A673 (cell line): ENCODE measurements at regions of chr1 and their contacts with region 1.

Region 1: DNA sequence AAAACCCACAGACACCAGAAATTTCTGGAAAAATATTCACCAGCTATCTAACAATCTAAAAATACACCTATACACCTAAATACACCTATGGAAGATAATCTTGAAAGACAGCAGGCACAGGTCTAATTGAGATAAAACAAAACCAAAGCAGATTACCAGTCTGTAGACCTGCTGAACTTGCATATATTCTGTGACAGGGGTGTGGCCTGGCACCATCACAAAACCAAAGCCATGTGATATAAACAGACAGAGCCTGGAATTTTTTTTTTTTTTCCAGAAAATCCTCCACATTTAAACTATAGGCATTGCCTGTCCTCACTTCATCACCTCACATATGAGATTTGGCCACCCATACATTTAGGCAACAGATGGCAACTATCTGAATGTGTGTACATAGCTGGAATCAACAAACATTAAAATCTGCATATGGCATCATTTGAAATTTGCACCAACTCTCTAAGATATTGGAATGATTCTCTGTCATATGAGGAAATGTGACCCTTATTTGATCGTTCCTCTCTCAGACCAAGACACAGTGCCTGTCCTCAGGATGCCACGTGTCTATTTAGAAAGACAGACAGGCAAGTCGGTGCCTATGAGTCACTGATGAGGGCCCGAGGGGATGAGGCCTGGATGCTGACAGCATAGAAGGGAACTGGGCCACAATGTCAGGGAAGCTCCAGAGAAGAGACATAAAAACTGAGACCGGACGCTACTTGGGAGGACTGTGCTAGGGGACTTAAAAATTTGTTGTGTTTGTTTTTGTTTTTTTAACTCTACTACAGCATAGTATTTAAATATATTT is 32.6 kb downstream of the NMNAT2 start:
- DNase-seq: no peak
- H3K4me3 ChIP-seq: no peak overlapping the region
- H3K27ac ChIP-seq: no peak overlapping the region
- H3K4me1 ChIP-seq: no peaks in the 10 kb centered on the region
- H3K27me3 ChIP-seq: peaks cover 15% of the 10 kb centered on the region
- CTCF ChIP-seq: no peak

Region 2: DNA sequence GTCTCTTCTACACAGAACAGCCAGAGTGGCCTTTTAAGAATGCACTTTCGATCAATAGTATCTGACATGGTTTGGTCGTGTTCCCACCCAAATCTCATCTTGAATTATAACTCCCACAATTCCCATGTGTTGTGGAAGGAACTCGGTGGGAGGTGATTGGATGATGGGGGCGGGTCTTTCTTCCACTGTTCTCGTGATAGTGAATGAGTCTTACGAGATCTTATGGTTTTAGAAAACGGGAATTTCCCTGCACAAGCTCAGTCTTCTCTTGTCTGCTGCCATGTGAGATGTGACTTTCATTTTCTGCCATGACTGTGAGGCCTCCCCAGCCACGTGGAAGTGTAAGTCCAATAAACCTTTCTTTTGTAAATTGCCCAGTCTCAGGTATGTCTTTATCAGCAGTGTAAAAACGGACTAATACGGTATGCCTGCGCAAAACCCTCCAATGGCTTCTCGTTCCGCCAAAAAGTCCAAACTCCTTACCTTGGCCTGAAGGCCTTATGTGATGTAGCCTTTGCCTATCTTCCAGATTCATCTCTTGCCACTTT is 63.8 kb after region 1 on chr1:
- CTCF ChIA-PET with region 1: no interaction called
- POLR2A ChIA-PET with region 1: no interaction called
- intact Hi-C with region 1: loop called (anchors 5 kb)
- DNase-seq: no peak
- H3K4me3 ChIP-seq: no peak overlapping the region
- H3K27ac ChIP-seq: no peak overlapping the region
- H3K4me1 ChIP-seq: no peaks in the 10 kb centered on the region
- H3K27me3 ChIP-seq: no peaks in the 10 kb centered on the region
- CTCF ChIP-seq: no peak